ENCODE measurements at regions of chr11 and their contacts with region 1.

Region 1: GRCh38 chr11:120952461-120953434 is 71.2 kb upstream of the TBCEL start:
- DNase-seq: peak; percentile 64
- ATAC-seq: peak; percentile 91
- H3K4me3 ChIP-seq: peak overlapping the region in 1 of 3 experiments; percentile 17; a peak in 1 of 6 replicates
- H3K27ac ChIP-seq: no peak overlapping the region
- H3K4me1 ChIP-seq: no peaks in the 10 kb centered on the region
- H3K27me3 ChIP-seq: peaks cover 5 to 7% of the 10 kb centered on the region in 2 experiments; a peak in 2 of 5 replicates
- CTCF ChIP-seq: peak; percentile 80
- EP300 ChIP-seq: no peak
- POLR2A ChIP-seq: no peak
- RAD21 ChIP-seq: peak; percentile 57

Region 2: GRCh38 chr11:120756931-120757330 is 195.8 kb before region 1 on chr11:
- CTCF ChIA-PET with region 1: no interaction called
- POLR2A ChIA-PET with region 1: no interaction called
- in situ Hi-C with region 1: no loop called
- intact Hi-C with region 1: loop called (anchors 5 kb)
- DNase-seq: peak; percentile 14
- ATAC-seq: peak; percentile 87
- H3K4me3 ChIP-seq: no peak overlapping the region
- H3K27ac ChIP-seq: no peak overlapping the region
- H3K4me1 ChIP-seq: no peaks in the 10 kb centered on the region
- H3K27me3 ChIP-seq: peaks cover 2 to 3% of the 10 kb centered on the region in 2 experiments; a peak in 2 of 5 replicates
- CTCF ChIP-seq: peak; percentile 58
- EP300 ChIP-seq: no peak
- POLR2A ChIP-seq: no peak
- RAD21 ChIP-seq: 0 out of 2 replicates have a peak, but pooled peaks have one; percentile 24

Measured in HepG2 (cell line).